SK-N-SH (cell line): ENCODE measurements at regions of chr3 and their contacts with region 1.

Region 1: GRCh38 chr3:169022457-169022856 is 641.1 kb downstream of the MECOM start:
- DNase-seq: no peak
- H3K4me3 ChIP-seq: no peak overlapping the region
- H3K27ac ChIP-seq: no peak overlapping the region
- H3K4me1 ChIP-seq: no peaks in the 10 kb centered on the region; a peak in 1 of 4 replicates
- H3K27me3 ChIP-seq: no peaks in the 10 kb centered on the region; the same call in 1 of the 2 replicates
- CTCF ChIP-seq: no peak
- EP300 ChIP-seq: no peak
- RAD21 ChIP-seq: no peak

Region 2: DNA sequence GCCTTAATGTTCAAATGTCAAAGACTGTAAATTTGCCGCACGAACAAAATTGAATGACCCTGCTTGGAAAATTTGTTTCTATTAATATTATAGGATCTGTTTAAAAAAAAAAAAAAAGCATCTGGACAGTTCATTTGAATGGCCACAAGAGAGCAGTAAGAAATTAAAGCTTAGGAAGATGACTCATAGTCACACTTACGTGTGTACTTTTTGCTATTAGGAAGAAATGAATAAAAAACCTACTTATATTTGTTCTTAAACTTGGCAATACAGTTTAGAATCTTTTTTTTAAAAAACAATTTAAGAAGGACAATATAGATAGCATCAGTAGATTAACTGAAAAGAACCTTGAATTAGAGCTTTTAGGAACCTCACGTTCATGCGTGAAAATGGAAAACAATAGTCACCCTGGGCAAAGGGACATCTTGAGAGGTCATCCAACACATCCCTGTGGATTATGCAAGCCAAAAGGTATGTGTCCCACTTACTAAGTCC is 19.3 kb after region 1 on chr3:
- CTCF ChIA-PET with region 1: interaction called, 11 read pairs
- POLR2A ChIA-PET with region 1: no interaction called
- DNase-seq: peak; percentile 3
- H3K4me3 ChIP-seq: no peak overlapping the region
- H3K27ac ChIP-seq: no peak overlapping the region
- H3K4me1 ChIP-seq: peaks cover 0 to 6% of the 10 kb centered on the region in 2 experiments; a peak in 1 of 4 replicates
- H3K27me3 ChIP-seq: no peaks in the 10 kb centered on the region
- CTCF ChIP-seq: peak; percentile 74
- EP300 ChIP-seq: no peak
- RAD21 ChIP-seq: peak; percentile 51